Caco-2 (cell line): ENCODE measurements at regions of chr4 and their contacts with region 1.

Region 1: DNA sequence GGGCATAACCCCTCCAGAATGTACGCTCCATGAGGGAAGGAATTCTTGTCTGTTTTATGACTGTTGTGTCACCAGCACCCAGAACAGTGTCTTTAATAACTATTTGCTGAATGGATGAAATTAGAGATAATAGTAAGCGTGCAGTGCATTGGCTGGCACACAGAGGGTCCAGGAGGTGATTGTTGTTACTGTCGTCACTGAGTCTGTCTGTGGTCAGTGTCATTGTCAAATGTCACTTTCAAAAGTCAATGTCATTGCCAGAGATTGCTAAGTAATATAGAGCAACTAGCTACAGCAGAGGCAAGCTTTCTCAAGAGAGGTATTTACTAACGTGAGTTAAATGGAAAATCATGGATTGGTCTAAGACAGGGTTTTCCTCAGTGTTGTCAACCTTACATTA is 70.7 kb downstream of the ARHGEF38 start:
- DNase-seq: no peak
- H3K4me3 ChIP-seq: no peak overlapping the region
- H3K4me3 Mint-ChIP-seq: no peak overlapping the region
- H3K27ac Mint-ChIP-seq: no peak overlapping the region
- H3K4me1 ChIP-seq: no peaks in the 10 kb centered on the region
- H3K4me1 Mint-ChIP-seq: no peaks in the 10 kb centered on the region
- H3K27me3 ChIP-seq: no peaks in the 10 kb centered on the region
- H3K27me3 Mint-ChIP-seq: no peaks in the 10 kb centered on the region
- CTCF ChIP-seq: no peak

Region 2: DNA sequence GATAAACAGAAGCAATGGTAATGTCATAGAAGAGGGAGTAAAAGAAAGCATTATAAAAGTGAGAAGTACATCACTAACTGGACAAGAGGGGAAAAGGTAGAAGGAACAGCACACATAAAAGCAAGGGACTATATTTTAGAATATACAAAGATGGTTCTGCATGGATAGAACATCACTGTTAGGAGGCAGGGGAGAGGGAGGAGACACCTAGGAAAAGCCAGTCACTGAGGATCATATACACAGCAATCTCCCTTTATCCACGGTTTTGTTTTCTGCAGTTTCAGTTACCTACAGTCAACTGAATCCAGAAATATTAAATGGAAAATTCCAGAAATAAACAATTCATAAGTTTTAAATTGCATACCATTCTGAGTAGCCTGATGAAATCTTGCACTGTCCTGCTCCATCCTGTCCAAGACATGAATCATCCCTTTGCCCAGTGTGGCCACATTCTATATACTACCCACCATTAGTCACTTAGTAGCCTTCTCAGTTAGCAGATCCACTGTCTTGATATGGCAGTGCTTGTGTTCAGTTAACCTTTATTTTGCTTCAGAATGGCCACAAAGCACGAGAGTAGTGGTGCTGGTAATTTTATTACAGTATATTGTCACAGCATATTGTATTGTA is 223.5 kb before region 1 on chr4:
- CTCF ChIA-PET with region 1: no interaction called
- POLR2A ChIA-PET with region 1: no interaction called
- intact Hi-C with region 1: no loop called
- DNase-seq: no peak
- H3K4me3 ChIP-seq: no peak overlapping the region
- H3K4me3 Mint-ChIP-seq: no peak overlapping the region
- H3K27ac Mint-ChIP-seq: no peak overlapping the region
- H3K4me1 ChIP-seq: no peaks in the 10 kb centered on the region
- H3K4me1 Mint-ChIP-seq: no peaks in the 10 kb centered on the region
- H3K27me3 ChIP-seq: no peaks in the 10 kb centered on the region
- H3K27me3 Mint-ChIP-seq: no peaks in the 10 kb centered on the region
- CTCF ChIP-seq: no peak

Region 3: DNA sequence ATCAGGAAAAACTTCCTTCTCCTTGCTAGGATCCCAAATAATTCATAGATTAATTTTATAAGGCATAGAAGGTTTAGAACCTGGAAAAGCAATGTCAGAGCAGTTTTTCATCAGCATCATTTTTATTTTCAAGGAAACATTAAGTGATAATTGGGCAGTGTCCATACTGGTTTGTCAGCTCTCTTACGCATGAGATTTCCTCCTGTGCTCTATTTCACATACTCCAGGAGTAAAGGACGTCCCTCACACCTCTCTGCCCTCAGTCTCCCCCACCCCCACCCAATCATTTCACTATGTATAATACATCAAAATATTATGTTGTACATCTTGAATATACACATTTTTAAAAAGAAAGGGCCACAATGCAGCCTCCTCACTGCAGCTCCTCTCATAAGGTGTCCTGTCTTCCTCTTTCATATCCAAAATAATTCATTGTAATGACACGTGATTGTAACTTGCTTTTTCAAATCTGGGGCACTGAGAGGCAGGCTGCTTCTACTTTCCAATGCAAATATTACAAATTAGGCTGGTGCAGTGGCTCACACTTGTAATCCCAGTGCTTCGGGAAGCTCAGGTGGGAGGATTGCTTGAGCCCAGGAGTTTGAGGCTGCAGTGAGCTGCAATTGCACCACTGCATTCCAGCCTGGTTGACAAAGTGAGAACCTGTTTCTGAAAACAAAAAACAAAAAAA is 36.3 kb before region 1 on chr4:
- CTCF ChIA-PET with region 1: no interaction called
- POLR2A ChIA-PET with region 1: no interaction called
- intact Hi-C with region 1: no loop called
- DNase-seq: no peak
- H3K4me3 ChIP-seq: no peak overlapping the region
- H3K4me3 Mint-ChIP-seq: peak overlapping the region; percentile 64
- H3K27ac Mint-ChIP-seq: peak overlapping the region; percentile 82
- H3K4me1 ChIP-seq: peaks cover 31% of the 10 kb centered on the region
- H3K4me1 Mint-ChIP-seq: peaks cover 46% of the 10 kb centered on the region
- H3K27me3 ChIP-seq: no peaks in the 10 kb centered on the region
- H3K27me3 Mint-ChIP-seq: no peaks in the 10 kb centered on the region
- CTCF ChIP-seq: no peak

Region 4: DNA sequence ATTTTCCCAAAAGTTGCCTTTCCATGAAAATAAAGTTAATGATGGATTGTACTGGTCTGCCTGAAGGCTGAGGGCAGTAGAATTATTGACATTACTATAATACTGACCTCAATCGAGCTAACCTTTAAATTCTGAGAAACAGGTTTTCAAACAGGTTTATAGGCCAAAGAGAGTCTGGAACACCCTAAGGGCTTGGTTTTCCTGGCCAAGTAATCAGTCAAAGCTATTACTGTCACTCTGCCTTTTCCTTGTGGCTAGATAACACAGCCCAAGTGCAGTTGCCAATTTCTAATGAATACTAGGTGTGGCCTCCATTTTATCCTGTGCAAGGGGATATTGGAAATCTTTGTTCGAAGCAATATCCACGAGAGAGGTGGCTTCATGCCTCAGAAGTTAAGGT is 10.1 kb after region 1 on chr4:
- CTCF ChIA-PET with region 1: no interaction called
- POLR2A ChIA-PET with region 1: no interaction called
- intact Hi-C with region 1: loop called (anchors 1 kb)
- DNase-seq: peak in 1 of 2 experiments; percentile 19
- H3K4me3 ChIP-seq: no peak overlapping the region
- H3K4me3 Mint-ChIP-seq: no peak overlapping the region
- H3K27ac Mint-ChIP-seq: no peak overlapping the region
- H3K4me1 ChIP-seq: 0 out of 2 replicates have a peak, but pooled peaks cover 4% of the 10 kb centered on the region
- H3K4me1 Mint-ChIP-seq: no peaks in the 10 kb centered on the region
- H3K27me3 ChIP-seq: no peaks in the 10 kb centered on the region
- H3K27me3 Mint-ChIP-seq: no peaks in the 10 kb centered on the region
- CTCF ChIP-seq: no peak

Region 5: DNA sequence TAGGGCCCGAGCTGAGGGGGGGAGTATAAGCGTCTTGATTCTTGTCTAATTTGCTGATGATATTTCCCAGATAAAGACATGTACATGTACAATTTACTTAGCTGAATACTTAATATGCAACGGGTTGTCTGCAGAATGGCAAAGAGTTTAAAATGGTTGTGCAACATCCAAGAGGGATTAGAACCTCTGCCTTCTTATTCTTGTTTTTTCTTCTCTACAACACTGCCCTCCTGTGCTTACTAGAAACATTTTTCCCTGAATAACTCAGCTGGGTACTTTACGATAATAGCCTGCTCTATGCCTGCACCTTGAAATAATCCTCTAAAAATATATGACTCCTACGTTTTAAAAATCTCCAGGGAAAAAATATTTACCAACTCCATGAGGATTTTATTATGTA is 43.6 kb after region 1 on chr4:
- CTCF ChIA-PET with region 1: no interaction called
- POLR2A ChIA-PET with region 1: no interaction called
- intact Hi-C with region 1: no loop called
- DNase-seq: peak in 1 of 2 experiments; percentile 22
- H3K4me3 ChIP-seq: no peak overlapping the region
- H3K4me3 Mint-ChIP-seq: no peak overlapping the region
- H3K27ac Mint-ChIP-seq: no peak overlapping the region
- H3K4me1 ChIP-seq: no peaks in the 10 kb centered on the region
- H3K4me1 Mint-ChIP-seq: no peaks in the 10 kb centered on the region
- H3K27me3 ChIP-seq: no peaks in the 10 kb centered on the region
- H3K27me3 Mint-ChIP-seq: no peaks in the 10 kb centered on the region
- CTCF ChIP-seq: peak; percentile 40 to 41